CD4-positive, alpha-beta memory T cell (primary cell): ENCODE measurements at regions of chr14 and their contacts with region 1.

Region 1: GRCh38 chr14:69625299-69626131 is 14.1 kb downstream of the SUSD6 start:
- DNase-seq: peak; percentile 71 to 88 (median 75)
- H3K4me3 ChIP-seq: peak overlapping the region; percentile 8 to 21
- H3K4me3 Mint-ChIP-seq: peak overlapping the region; percentile 70 to 88 (median 78)
- H3K27ac ChIP-seq: peak overlapping the region; percentile 52
- H3K27ac Mint-ChIP-seq: peak overlapping the region; percentile 84 to 96 (median 91)
- H3K4me1 ChIP-seq: peaks cover 98% of the 10 kb centered on the region
- H3K4me1 Mint-ChIP-seq: peaks cover 68 to 96% (median 87%) of the 10 kb centered on the region in 4 donors
- H3K27me3 ChIP-seq: no peaks in the 10 kb centered on the region
- H3K27me3 Mint-ChIP-seq: no peaks in the 10 kb centered on the region

Region 2: GRCh38 chr14:69398053-69398817 is 227.3 kb before region 1 on chr14 and contains the starts of genes ERH and SLC39A9:
- CTCF ChIA-PET with region 1: no interaction called
- POLR2A ChIA-PET with region 1: no interaction called
- intact Hi-C with region 1: no loop called
- DNase-seq: peak; percentile 96 to 98 (median 96)
- H3K4me3 ChIP-seq: peak within 1 kb of the TSS; percentile 86 to 91
- H3K4me3 Mint-ChIP-seq: peak within 1 kb of the TSS; percentile 91 to 99 (median 96)
- H3K27ac ChIP-seq: peak within 1 kb of the TSS; percentile 87
- H3K27ac Mint-ChIP-seq: peak within 1 kb of the TSS; percentile 98 to 100 (median 100)
- H3K4me1 ChIP-seq: peaks cover 81% of the 10 kb centered on the region
- H3K4me1 Mint-ChIP-seq: peaks cover 41 to 89% (median 59%) of the 10 kb centered on the region in 4 donors
- H3K27me3 ChIP-seq: no peaks in the 10 kb centered on the region
- H3K27me3 Mint-ChIP-seq: no peaks in the 10 kb centered on the region
- total RNA-seq, gene ERH: 118 to 135 TPM
- total RNA-seq, gene SLC39A9: 33.7 to 38.6 TPM

Region 3: GRCh38 chr14:69637503-69638030 is 12.1 kb after region 1 on chr14:
- CTCF ChIA-PET with region 1: interaction called, 3 read pairs
- POLR2A ChIA-PET with region 1: interaction called, 279 read pairs
- intact Hi-C with region 1: loop called (anchors 1 kb)
- DNase-seq: no peak
- H3K4me3 ChIP-seq: no peak overlapping the region
- H3K4me3 Mint-ChIP-seq: peak overlapping the region in 7 of 8 donors; percentile 68 to 88 (median 78)
- H3K27ac ChIP-seq: peak overlapping the region; percentile 47
- H3K27ac Mint-ChIP-seq: peak overlapping the region; percentile 85 to 97 (median 92)
- H3K4me1 ChIP-seq: peaks cover 75% of the 10 kb centered on the region
- H3K4me1 Mint-ChIP-seq: peaks cover 67 to 89% (median 79%) of the 10 kb centered on the region in 4 donors
- H3K27me3 ChIP-seq: no peaks in the 10 kb centered on the region
- H3K27me3 Mint-ChIP-seq: no peaks in the 10 kb centered on the region

Region 4: DNA sequence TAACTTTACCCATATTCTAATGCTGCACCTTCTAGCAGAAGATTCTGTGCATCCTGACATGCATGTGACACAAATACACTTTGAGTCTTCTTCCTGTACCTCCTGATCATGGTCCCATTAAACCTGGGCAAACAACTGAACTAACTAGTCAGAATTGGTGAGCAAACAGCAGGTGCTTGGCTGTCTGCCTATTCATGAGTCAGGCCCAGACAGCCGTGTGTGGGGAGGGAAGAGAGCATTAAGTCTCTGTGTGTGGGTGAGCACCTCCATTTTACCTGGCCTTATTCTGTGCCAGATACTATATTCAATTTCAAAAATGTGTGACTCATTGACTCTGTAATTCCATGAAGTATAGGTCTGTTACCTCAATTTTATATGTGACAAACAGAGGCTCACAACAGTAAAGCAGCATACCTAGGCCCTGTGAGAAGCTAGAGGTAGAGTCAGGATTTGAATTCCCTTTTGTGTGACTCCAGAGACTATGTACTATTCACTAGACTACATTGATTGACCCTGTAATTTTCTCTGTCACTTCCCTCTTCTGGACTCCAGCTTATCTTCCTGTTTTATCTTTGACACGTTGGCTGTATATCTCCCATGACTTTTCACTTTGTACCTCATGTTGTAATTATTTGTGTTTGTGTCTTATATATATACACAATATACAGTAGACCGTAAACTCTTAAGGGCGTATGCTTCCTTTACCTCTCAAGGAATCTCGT is 18.1 kb after region 1 on chr14:
- CTCF ChIA-PET with region 1: interaction called, 3 read pairs
- POLR2A ChIA-PET with region 1: interaction called, 279 read pairs
- intact Hi-C with region 1: loop called (anchors 2 kb)
- DNase-seq: peak in 1 of 5 donors; percentile 83
- H3K4me3 ChIP-seq: no peak overlapping the region
- H3K4me3 Mint-ChIP-seq: peak overlapping the region in 4 of 8 donors; percentile 20 to 73 (median 54)
- H3K27ac ChIP-seq: no peak overlapping the region
- H3K27ac Mint-ChIP-seq: peak overlapping the region; percentile 8 to 87 (median 69)
- H3K4me1 ChIP-seq: peaks cover 65% of the 10 kb centered on the region
- H3K4me1 Mint-ChIP-seq: peaks cover 57 to 86% (median 68%) of the 10 kb centered on the region in 4 donors
- H3K27me3 ChIP-seq: no peaks in the 10 kb centered on the region
- H3K27me3 Mint-ChIP-seq: no peaks in the 10 kb centered on the region

Region 5: GRCh38 chr14:69648477-69649451 is 23.2 kb after region 1 on chr14:
- CTCF ChIA-PET with region 1: no interaction called
- POLR2A ChIA-PET with region 1: interaction called, 10 read pairs
- intact Hi-C with region 1: loop called (anchors 2 kb)
- DNase-seq: no peak
- H3K4me3 ChIP-seq: no peak overlapping the region
- H3K4me3 Mint-ChIP-seq: peak overlapping the region in 6 of 8 donors; percentile 35 to 80 (median 60)
- H3K27ac ChIP-seq: no peak overlapping the region
- H3K27ac Mint-ChIP-seq: peak overlapping the region in 3 of 7 donors; percentile 8 to 79 (median 38)
- H3K4me1 ChIP-seq: peaks cover 87% of the 10 kb centered on the region
- H3K4me1 Mint-ChIP-seq: peaks cover 70 to 93% (median 83%) of the 10 kb centered on the region in 4 donors
- H3K27me3 ChIP-seq: no peaks in the 10 kb centered on the region
- H3K27me3 Mint-ChIP-seq: no peaks in the 10 kb centered on the region